Left cardiac atrium (tissue), 4 donors: ENCODE measurements at regions of chr15 and their contacts with region 1.

Region 1: GRCh38 chr15:78108299-78109084 is 16.1 kb downstream of the SH2D7 start:
- DNase-seq: peak; percentile 88
- ATAC-seq: peak; percentile 87 to 89

Region 2: DNA sequence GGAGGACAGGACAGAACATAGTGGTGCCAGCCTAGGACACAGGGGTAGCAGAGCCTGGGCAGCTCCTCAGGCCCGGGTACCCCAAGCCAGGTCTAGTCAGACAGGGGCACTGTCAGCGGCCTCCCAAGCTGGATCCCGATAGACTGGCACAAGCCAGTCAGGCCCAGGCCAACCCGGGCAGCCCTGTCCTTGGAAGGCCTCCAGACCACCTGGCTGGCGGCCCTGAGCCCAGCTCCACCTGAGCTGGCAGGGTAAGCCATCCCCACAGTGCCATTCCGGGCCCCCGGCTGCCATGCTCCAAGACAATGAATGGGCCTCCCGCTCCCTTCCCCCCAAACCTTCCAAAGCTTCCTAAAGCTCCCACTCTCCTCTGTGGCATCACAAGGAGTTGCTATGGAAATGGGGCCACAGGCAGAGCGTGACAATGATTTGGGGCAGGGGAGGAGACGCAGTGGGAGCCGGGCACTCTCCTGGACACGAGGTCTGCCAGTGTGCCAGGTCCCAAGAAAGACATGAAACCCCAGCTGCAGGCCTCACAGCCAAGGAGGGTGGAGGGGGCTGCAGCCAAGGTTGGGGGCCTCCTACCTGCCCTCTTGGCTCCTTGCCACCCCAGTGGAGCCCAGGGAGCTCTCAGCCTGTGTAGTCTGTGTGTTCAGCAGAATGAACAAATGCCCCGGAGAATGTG is 310.2 kb before region 1 on chr15:
- intact Hi-C with region 1: no loop called
- DNase-seq: no peak
- ATAC-seq: no peak

Region 3: GRCh38 chr15:77959432-77959879 is 149.0 kb before region 1 on chr15:
- intact Hi-C with region 1: loop called in 1 of 2 experiments (anchors 2 kb)
- DNase-seq: peak; percentile 80
- ATAC-seq: peak; percentile 96 to 99

Region 4: DNA sequence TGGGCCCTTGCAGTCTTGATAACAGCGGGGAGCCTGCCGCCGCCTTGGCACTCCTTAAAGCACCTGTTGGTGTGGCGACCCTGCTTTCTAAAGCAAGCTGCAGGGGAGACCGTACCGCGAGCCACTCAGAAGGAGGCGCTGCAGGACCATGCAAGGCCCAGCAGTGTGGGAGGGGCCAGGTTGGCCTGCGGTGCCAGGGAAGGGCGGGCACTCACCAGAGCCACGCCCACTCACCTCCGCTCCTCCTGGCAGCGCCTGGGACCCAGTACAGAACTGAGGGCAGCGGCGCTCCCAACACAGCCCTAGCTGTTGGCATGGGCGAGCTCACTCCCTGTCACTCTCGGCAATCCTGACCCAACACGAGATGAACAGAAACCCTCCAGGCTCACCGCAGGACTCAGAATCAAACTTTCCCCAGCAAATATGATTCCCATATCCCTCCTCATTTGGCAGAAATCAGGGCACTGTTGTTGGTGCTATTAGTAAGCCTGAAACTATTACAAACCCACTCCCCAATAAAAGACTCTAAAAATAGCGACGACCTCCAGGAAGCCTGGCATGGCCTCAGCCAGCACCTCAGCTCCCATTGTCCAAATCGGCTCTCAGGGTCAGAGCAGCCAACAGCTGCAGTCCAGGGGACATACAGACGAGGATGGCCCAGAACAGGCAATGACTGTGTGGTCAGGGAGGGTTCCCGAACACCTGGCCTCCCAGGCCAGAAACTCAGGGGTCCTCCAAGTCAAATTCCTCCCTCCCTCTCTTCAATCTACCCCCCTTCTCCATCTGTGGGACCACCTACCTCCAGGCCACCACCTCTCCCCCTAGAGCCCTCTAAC is 108.2 kb before region 1 on chr15:
- intact Hi-C with region 1: loop called in 1 of 2 experiments (anchors 2 kb)
- DNase-seq: peak; percentile 76
- ATAC-seq: peak; percentile 71 to 75

Region 5: DNA sequence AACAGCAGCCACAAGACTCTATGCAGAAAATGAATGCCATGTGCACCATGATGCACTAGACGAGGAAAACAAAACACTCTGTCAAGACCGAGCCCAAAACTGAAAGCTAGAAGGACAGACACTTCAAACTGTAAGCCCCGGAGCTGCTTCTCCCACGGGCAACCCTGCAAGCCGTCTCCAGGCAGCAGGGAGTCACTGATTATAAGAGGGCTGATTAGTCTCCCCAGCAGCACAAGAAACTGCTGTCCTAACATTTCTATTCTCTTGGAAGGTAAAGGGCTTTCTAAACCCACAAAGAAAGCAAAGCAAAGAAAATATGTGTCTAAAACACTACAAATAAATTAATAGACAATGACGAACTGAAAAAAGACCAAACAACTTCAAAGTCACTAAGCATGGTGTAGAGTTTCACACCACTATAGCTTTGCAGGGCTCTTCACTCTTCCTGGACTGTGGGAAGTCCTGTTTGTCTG is 46.5 kb before region 1 on chr15:
- intact Hi-C with region 1: no loop called
- DNase-seq: no peak
- ATAC-seq: no peak

Region 6: DNA sequence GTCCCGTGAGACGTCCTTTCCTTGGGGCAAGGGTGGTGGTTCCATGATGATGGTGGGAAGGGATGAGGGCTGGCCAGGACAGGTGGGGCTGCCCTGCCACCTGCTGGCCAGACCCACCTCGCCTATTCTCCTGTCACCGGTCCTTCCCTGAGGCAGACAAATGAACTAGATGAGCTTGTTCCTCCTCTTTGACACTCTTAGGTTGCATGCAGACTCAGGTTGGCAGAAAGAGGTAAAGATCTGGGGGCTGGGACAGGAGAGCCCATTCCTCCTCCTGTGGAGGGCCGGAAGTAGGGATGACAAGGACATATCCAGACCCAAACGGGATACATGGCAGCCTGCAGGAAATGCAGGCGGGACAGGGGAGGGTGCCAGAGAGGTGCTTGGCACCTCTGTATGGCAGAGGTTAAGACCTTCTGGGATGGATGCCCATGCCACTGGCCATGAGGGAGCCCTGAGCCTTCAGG is 87.3 kb after region 1 on chr15:
- intact Hi-C with region 1: loop called (anchors 5 kb)
- DNase-seq: no peak
- ATAC-seq: peak; percentile 82 to 88

Region 7: DNA sequence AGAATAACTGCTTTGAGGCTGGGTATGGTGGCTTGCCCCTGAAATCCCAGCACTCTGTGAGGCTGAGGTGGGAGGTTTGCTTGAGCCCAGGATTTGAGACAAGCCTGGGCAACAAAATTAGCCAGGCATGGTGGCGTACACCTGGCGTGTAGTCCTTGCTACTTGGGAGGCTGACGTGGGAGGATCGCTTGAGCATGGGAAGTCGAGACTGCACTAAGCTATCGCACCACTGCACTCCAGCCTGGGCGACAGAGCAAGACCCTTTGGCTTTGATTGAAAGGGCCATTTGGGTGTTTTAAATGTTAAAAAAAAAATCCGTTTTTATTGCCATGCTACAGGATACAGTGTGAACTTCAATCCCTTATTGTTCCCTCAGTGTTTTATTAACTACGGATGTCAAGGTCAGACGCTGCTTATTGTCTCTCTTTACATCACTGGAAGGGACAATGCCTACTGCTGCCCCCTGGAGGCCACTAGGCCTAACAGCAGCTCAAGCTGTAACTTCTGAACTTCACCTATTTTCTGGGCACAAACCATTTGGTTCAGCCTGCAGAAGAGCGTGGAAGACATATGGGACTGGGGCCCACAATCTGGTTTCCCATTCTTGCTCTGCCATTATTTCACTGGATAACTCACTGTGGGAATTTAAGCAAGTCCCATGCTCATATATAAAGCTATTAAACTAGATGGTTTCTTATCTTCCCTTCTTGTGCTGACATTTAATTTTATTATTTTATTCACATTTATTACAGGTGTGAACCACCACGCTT is 314.3 kb after region 1 on chr15:
- intact Hi-C with region 1: loop called in 1 of 2 experiments (anchors 10 kb)
- DNase-seq: peak; percentile 55
- ATAC-seq: peak; percentile 65 to 73